ENCODE measurements at regions of chr3 and their contacts with region 1.

Region 1: DNA sequence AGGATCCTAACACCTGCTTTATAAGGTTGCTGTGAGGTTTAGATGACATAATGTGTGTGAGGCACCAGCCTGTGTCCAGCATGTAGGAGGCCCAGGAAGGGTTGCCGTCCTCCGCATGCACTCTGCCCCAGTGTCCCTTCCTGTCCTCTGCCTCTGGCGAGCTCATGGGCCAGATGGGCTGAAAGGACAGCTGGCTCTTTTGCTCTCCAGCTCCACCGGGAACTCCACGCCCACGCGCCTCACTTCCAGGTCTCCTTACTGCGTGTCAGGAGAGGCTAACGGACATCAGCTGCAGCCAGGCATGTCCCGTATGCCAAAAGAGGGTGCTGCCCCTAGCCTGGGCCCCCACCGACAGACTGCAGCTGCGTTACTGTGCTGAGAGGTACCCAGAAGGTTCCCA is 12.2 kb downstream of the MUC20 start:
- DNase-seq: no peak
- H3K4me3 ChIP-seq: no peak overlapping the region
- H3K27ac ChIP-seq: no peak overlapping the region
- H3K4me1 ChIP-seq: peaks cover 3 to 17% (median 10%) of the 10 kb centered on the region in 4 donors
- H3K27me3 ChIP-seq: no peaks in the 10 kb centered on the region
- CTCF ChIP-seq: no peak
- EP300 ChIP-seq: no peak
- POLR2A ChIP-seq: no peak

Region 2: DNA sequence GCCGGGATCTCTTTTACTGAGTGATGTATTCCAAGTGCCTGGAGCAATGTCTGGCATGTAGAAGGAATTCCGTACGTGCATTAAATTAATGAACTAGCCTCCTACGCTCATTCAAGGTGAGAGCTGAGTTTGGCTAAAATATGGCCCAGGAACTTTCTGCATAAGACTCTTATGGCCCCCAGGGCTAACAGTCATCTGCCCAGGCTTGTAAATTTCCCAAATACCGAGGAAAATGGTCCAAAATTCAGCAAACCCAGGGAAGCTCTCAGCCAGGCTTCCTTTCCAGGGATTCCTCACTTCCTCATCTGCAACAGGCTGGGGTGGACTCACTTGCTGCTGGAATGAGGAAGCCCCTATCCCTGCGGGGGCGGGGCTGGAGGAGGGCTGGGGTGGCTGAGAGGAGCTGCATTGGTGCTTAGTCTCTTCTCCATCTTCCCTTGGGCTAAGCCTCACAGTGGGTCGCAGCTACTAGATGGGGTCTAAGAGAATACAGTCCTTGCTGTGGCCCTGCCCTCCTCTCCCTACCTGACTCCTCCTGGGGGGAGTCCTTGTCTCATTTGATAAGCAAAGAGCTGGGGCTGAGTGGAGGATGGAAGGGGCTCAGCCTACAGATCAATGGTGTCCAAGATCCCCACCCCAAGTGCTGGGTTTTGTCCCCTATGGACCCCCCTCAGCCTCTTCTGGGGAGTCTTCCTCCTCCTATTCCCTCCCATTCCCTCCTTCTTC is 120.7 kb before region 1 on chr3:
- in situ Hi-C with region 1: loop called in 3 of 4 experiments (anchors 5 to 25 kb)
- intact Hi-C with region 1: no loop called
- DNase-seq: peak; percentile 20
- H3K4me3 ChIP-seq: no peak overlapping the region
- H3K27ac ChIP-seq: no peak overlapping the region
- H3K4me1 ChIP-seq: peaks cover 0 to 4% (median 0%) of the 10 kb centered on the region in 4 donors
- H3K27me3 ChIP-seq: no peaks in the 10 kb centered on the region
- CTCF ChIP-seq: no peak
- EP300 ChIP-seq: no peak
- POLR2A ChIP-seq: no peak

Region 3: GRCh38 chr3:195921334-195921791 is 188.4 kb after region 1 on chr3:
- in situ Hi-C with region 1: no loop called
- intact Hi-C with region 1: no loop called
- DNase-seq: no peak
- H3K4me3 ChIP-seq: no peak overlapping the region
- H3K27ac ChIP-seq: no peak overlapping the region
- H3K4me1 ChIP-seq: no peaks in the 10 kb centered on the region
- H3K27me3 ChIP-seq: no peaks in the 10 kb centered on the region
- CTCF ChIP-seq: no peak
- EP300 ChIP-seq: no peak
- POLR2A ChIP-seq: no peak

Region 4: GRCh38 chr3:195999896-196000295 is 267.0 kb after region 1 on chr3:
- in situ Hi-C with region 1: no loop called
- intact Hi-C with region 1: no loop called
- DNase-seq: no peak
- H3K4me3 ChIP-seq: no peak overlapping the region
- H3K27ac ChIP-seq: no peak overlapping the region
- H3K4me1 ChIP-seq: no peaks in the 10 kb centered on the region
- H3K27me3 ChIP-seq: peaks cover 4% of the 10 kb centered on the region
- CTCF ChIP-seq: no peak
- EP300 ChIP-seq: no peak
- POLR2A ChIP-seq: no peak

Region 5: GRCh38 chr3:196219194-196219978 is 486.4 kb after region 1 on chr3:
- in situ Hi-C with region 1: loop called in 1 of 4 experiments (anchors 25 kb)
- intact Hi-C with region 1: no loop called
- DNase-seq: peak; percentile 65
- H3K4me3 ChIP-seq: peak overlapping the region in 3 of 4 donors; percentile 9 to 39 (median 10)
- H3K27ac ChIP-seq: peak overlapping the region; percentile 13 to 54 (median 39)
- H3K4me1 ChIP-seq: peaks cover 0 to 30% (median 26%) of the 10 kb centered on the region in 4 donors
- H3K27me3 ChIP-seq: no peaks in the 10 kb centered on the region
- CTCF ChIP-seq: no peak
- EP300 ChIP-seq: no peak
- POLR2A ChIP-seq: no peak